Activated B cell treated with CpG ODN at 0.5 μM for 24 hours (primary cell): ENCODE measurements at regions of chr19 and their contacts with region 1.

Region 1: DNA sequence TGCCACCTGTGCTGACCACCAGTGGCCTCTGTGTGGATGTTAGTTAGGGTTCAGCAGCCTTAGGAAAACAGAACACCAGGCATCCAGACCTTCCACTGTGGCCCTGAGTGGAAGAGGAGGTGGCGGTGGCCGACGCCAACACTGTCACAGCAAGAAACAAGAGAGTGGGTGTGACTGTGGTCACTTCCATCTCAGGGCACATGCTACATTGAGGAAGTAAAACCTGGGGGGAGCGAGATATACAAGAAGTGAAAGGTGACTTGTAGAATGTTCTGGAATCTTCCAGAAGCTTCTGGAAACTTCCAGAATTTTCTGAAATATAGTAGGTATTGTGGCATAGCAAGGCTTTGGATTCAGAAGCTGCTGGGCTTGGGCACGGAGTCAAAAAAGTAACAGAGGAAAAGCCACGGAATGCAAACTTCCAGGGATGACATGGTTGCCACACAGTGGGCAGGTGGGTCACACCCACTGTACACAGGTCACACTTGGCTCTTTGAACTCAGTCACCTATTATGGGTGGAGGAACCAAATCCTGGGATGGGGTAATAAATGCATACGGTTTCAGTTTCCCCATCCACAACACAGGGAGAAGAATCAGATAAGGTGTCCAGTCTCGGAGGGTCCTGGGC is 24.3 kb downstream of the GNG7 start:
- DNase-seq: peak; percentile 46
- ATAC-seq: peak; percentile 59
- H3K4me3 Mint-ChIP-seq: peak overlapping the region; percentile 62
- H3K27ac Mint-ChIP-seq: peak overlapping the region; percentile 96
- H3K4me1 Mint-ChIP-seq: peaks cover 72% of the 10 kb centered on the region
- H3K27me3 Mint-ChIP-seq: no peaks in the 10 kb centered on the region
- CTCF ChIP-seq: no peak

Region 2: GRCh38 chr19:2648528-2648937 is 29.6 kb before region 1 on chr19:
- CTCF ChIA-PET with region 1: interaction called, 9 read pairs
- POLR2A ChIA-PET with region 1: interaction called, 3 read pairs
- intact Hi-C with region 1: loop called (anchors 1 kb)
- DNase-seq: peak; percentile 75
- ATAC-seq: peak; percentile 87
- H3K4me3 Mint-ChIP-seq: no peak overlapping the region
- H3K27ac Mint-ChIP-seq: peak overlapping the region; percentile 35
- H3K4me1 Mint-ChIP-seq: peaks cover 43% of the 10 kb centered on the region
- H3K27me3 Mint-ChIP-seq: no peaks in the 10 kb centered on the region
- CTCF ChIP-seq: no peak

Region 3: GRCh38 chr19:2691951-2692350 is 13.8 kb after region 1 on chr19:
- CTCF ChIA-PET with region 1: no interaction called
- POLR2A ChIA-PET with region 1: interaction called, 176 read pairs
- intact Hi-C with region 1: no loop called
- DNase-seq: no peak
- ATAC-seq: no peak
- H3K4me3 Mint-ChIP-seq: no peak overlapping the region
- H3K27ac Mint-ChIP-seq: peak overlapping the region; percentile 46
- H3K4me1 Mint-ChIP-seq: peaks cover 57% of the 10 kb centered on the region
- H3K27me3 Mint-ChIP-seq: no peaks in the 10 kb centered on the region
- CTCF ChIP-seq: no peak

Region 4: DNA sequence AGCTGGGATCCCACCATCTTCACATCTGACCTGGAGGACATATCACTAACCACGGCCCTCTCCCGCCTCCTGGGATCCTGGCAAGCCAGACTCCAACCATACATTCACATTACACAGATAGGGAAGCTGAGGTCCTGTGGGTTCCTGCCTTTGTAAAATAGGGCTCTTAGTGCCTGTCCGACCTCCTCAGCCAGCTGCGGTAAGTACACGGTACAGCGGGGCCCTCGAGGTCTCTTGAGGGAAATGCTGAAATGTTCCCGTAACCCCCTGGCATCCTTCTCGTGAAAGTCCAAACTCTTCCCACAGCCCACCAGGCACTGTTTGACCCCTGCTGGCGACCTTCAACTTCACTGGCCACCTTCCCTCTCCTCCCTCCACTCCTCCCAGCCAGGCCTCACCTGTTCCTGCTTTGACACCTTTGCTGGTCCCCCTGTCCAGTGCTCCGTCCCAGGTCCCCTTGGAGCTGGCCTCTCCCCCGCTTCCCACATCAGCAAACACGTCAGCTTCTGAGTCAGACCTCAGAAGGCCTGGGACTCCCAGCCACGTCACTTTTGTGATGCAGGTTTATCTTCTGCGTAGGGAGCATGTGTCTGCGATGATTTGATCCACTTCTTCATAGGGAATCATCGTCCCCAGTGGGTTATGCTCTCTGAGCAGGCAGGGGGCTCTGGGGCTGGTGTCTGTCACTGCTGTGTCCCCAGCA is 33.2 kb after region 1 on chr19:
- CTCF ChIA-PET with region 1: no interaction called
- POLR2A ChIA-PET with region 1: interaction called, 41 read pairs
- intact Hi-C with region 1: loop called (anchors 1 kb)
- DNase-seq: no peak
- ATAC-seq: peak; percentile 5
- H3K4me3 Mint-ChIP-seq: peak overlapping the region; percentile 66
- H3K27ac Mint-ChIP-seq: peak overlapping the region; percentile 87
- H3K4me1 Mint-ChIP-seq: peaks cover 39% of the 10 kb centered on the region
- H3K27me3 Mint-ChIP-seq: no peaks in the 10 kb centered on the region
- CTCF ChIP-seq: no peak

Region 5: DNA sequence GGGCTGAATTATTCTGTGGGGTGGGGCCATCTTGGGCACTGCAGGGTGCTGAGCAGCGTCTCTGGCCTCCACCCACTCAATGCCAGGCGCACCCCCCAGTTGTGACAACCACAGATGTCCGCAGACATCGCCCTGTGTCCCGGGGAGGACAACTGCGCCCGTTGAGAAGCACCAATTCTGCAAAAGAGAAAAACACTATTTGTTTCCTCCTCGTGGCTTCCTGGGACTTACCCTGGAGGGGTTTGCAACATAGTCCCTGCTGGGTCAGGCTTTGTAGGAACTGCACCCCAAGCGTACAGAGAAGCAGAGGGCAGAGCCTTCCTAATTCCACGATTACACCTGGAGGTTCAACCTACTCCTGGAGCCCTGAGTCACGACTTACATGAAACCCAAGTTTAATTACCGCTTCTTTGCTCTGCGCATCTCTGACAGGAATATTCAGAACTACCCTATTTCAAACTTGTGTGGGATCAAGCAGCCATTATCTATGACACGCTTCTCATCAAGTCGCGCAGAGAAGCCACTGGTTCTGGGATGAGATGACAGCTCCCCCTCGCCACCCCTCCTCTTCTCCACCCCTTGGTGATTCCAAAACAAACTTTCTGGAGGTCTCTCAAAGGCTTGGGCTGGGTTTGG is 72.8 kb after region 1 on chr19:
- CTCF ChIA-PET with region 1: interaction called, 6 read pairs
- POLR2A ChIA-PET with region 1: interaction called, 4 read pairs
- intact Hi-C with region 1: loop called (anchors 1 kb)
- DNase-seq: no peak
- ATAC-seq: no peak
- H3K4me3 Mint-ChIP-seq: no peak overlapping the region
- H3K27ac Mint-ChIP-seq: no peak overlapping the region
- H3K4me1 Mint-ChIP-seq: peaks cover 12% of the 10 kb centered on the region
- H3K27me3 Mint-ChIP-seq: no peaks in the 10 kb centered on the region
- CTCF ChIP-seq: no peak

Region 6: GRCh38 chr19:2969104-2969504 is 290.9 kb after region 1 on chr19:
- CTCF ChIA-PET with region 1: no interaction called
- POLR2A ChIA-PET with region 1: no interaction called
- intact Hi-C with region 1: no loop called
- DNase-seq: no peak
- ATAC-seq: no peak
- H3K4me3 Mint-ChIP-seq: no peak overlapping the region
- H3K27ac Mint-ChIP-seq: peak overlapping the region; percentile 53
- H3K4me1 Mint-ChIP-seq: peaks cover 42% of the 10 kb centered on the region
- H3K27me3 Mint-ChIP-seq: peaks cover 2% of the 10 kb centered on the region
- CTCF ChIP-seq: no peak